ENCODE measurements at regions of chr4 and their contacts with region 1.

Region 1: GRCh38 chr4:170990989-170991589 is 822.1 kb upstream of the GALNTL6 start:
- DNase-seq: no peak
- ATAC-seq: peak; percentile 90
- H3K4me3 ChIP-seq: no peak overlapping the region
- H3K27ac ChIP-seq: no peak overlapping the region
- H3K4me1 ChIP-seq: no peaks in the 10 kb centered on the region
- H3K27me3 ChIP-seq: no peaks in the 10 kb centered on the region
- CTCF ChIP-seq: peak; percentile 50 to 71 (median 62); a peak in 5 of 6 replicates
- EP300 ChIP-seq: no peak
- POLR2A ChIP-seq: no peak
- RAD21 ChIP-seq: peak; percentile 76

Region 2: GRCh38 chr4:170589597-170590191 is 401.4 kb before region 1 on chr4:
- CTCF ChIA-PET with region 1: interaction called, 3 read pairs
- POLR2A ChIA-PET with region 1: no interaction called
- RAD21 ChIA-PET with region 1: no interaction called
- SMC1A ChIA-PET with region 1: no interaction called
- in situ Hi-C with region 1: no loop called
- intact Hi-C with region 1: loop called (anchors 5 kb)
- DNase-seq: peak; percentile 37
- ATAC-seq: peak; percentile 100
- H3K4me3 ChIP-seq: no peak overlapping the region
- H3K27ac ChIP-seq: no peak overlapping the region
- H3K4me1 ChIP-seq: no peaks in the 10 kb centered on the region
- H3K27me3 ChIP-seq: no peaks in the 10 kb centered on the region
- CTCF ChIP-seq: peak; percentile 57 to 64 (median 63)
- EP300 ChIP-seq: no peak
- POLR2A ChIP-seq: no peak
- RAD21 ChIP-seq: peak; percentile 70

Region 3: GRCh38 chr4:171186700-171187099 is 195.6 kb after region 1 on chr4:
- CTCF ChIA-PET with region 1: interaction called, 14 read pairs
- POLR2A ChIA-PET with region 1: no interaction called
- RAD21 ChIA-PET with region 1: interaction called, 7 read pairs
- SMC1A ChIA-PET with region 1: interaction called, 3 read pairs
- in situ Hi-C with region 1: no loop called
- intact Hi-C with region 1: no loop called
- DNase-seq: no peak
- ATAC-seq: peak; percentile 67
- H3K4me3 ChIP-seq: no peak overlapping the region
- H3K27ac ChIP-seq: no peak overlapping the region
- H3K4me1 ChIP-seq: no peaks in the 10 kb centered on the region
- H3K27me3 ChIP-seq: no peaks in the 10 kb centered on the region
- CTCF ChIP-seq: no peak; a peak in 1 of 6 replicates
- EP300 ChIP-seq: no peak
- POLR2A ChIP-seq: no peak
- RAD21 ChIP-seq: 0 out of 2 replicates have a peak, but pooled peaks have one; percentile 17

Region 4: DNA sequence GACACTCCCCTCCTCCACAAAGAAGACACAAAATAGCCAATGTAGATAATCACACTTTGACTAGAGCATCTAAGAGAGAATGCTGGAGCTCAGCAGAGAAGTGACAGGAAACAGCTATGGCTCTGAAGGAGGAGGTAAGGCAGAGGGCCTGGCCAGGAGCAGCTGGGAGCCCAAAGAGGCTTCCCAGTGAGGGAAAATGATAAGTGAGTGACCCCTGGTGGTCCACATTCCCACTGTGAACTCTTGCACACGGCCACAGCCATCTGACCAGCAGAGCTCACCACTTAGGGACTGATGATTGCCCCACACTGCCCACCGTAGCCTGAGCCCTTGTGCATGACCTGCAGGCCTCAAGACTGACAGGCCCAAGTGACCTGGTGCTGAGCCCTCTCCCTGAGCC is 659.5 kb after region 1 on chr4:
- CTCF ChIA-PET with region 1: interaction called, 6 read pairs
- POLR2A ChIA-PET with region 1: no interaction called
- RAD21 ChIA-PET with region 1: interaction called, 7 read pairs
- SMC1A ChIA-PET with region 1: no interaction called
- in situ Hi-C with region 1: no loop called
- intact Hi-C with region 1: loop called (anchors 5 kb)
- DNase-seq: no peak
- ATAC-seq: peak; percentile 84
- H3K4me3 ChIP-seq: no peak overlapping the region
- H3K27ac ChIP-seq: no peak overlapping the region
- H3K4me1 ChIP-seq: no peaks in the 10 kb centered on the region
- H3K27me3 ChIP-seq: no peaks in the 10 kb centered on the region
- CTCF ChIP-seq: peak; percentile 34 to 41 (median 37); a peak in 4 of 6 replicates
- EP300 ChIP-seq: no peak
- POLR2A ChIP-seq: no peak
- RAD21 ChIP-seq: peak; percentile 69

Region 5: DNA sequence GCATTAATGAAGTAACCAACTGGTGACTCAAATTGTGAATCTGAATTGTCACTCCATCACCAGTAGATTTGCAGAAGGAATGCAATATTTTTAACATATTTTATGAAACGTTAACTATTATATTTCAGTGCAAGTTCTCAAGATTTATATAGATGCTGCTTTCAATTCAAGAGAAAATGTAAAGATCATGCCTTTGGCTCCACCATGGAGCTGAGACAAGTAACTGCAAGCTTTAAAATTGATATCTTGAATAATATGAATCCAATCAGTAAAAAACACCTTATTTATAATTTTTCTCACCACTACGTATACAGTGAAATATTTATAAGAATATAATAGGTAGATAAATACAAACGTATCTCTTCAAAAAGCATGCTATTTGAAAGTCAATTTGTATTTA is 794.3 kb after region 1 on chr4:
- CTCF ChIA-PET with region 1: no interaction called
- POLR2A ChIA-PET with region 1: no interaction called
- RAD21 ChIA-PET with region 1: no interaction called
- SMC1A ChIA-PET with region 1: no interaction called
- in situ Hi-C with region 1: no loop called
- intact Hi-C with region 1: loop called (anchors 10 kb)
- DNase-seq: no peak
- ATAC-seq: no peak
- H3K4me3 ChIP-seq: no peak overlapping the region
- H3K27ac ChIP-seq: no peak overlapping the region
- H3K4me1 ChIP-seq: no peaks in the 10 kb centered on the region
- H3K27me3 ChIP-seq: no peaks in the 10 kb centered on the region; a peak in 1 of 4 replicates
- CTCF ChIP-seq: peak in 1 of 3 experiments; percentile 24; a peak in 2 of 6 replicates
- EP300 ChIP-seq: no peak
- POLR2A ChIP-seq: no peak
- RAD21 ChIP-seq: peak; percentile 55

Region 6: DNA sequence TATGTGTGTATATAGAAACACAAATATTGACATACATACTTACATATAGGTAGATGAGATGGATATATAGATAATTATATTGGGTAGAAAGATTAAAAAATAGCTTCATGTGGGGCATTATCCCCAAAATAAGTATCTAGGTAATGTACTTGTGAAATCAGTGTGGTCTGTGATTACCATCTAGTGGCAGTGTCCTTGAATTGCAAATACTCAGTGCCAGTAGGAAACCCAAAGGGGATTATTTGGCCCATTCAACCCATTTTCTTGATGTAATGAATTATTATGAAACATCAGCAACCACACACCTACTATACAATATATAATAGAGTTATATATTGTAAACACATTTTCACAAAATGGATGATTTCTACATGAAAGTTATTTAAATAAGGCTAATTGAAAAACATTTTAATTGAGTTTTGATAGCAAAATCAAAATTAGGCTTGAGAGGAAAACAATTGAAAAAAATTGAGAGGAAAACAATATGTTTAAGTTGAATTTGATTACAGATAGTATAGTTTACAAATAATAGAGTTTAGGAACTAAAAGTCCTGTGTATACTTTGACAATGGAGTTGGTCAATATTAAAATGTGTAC is 1211.5 kb after region 1 on chr4:
- CTCF ChIA-PET with region 1: interaction called, 6 read pairs
- POLR2A ChIA-PET with region 1: no interaction called
- RAD21 ChIA-PET with region 1: no interaction called
- SMC1A ChIA-PET with region 1: no interaction called
- in situ Hi-C with region 1: no loop called
- intact Hi-C with region 1: loop called (anchors 5 kb)
- DNase-seq: no peak
- ATAC-seq: peak; percentile 59
- H3K4me3 ChIP-seq: no peak overlapping the region
- H3K27ac ChIP-seq: no peak overlapping the region
- H3K4me1 ChIP-seq: no peaks in the 10 kb centered on the region
- H3K27me3 ChIP-seq: no peaks in the 10 kb centered on the region
- CTCF ChIP-seq: peak; percentile 45 to 51 (median 51); a peak in 5 of 6 replicates
- EP300 ChIP-seq: no peak
- POLR2A ChIP-seq: no peak
- RAD21 ChIP-seq: peak; percentile 69